ENCODE measurements at regions of chr4 and their contacts with region 1.

Region 1: DNA sequence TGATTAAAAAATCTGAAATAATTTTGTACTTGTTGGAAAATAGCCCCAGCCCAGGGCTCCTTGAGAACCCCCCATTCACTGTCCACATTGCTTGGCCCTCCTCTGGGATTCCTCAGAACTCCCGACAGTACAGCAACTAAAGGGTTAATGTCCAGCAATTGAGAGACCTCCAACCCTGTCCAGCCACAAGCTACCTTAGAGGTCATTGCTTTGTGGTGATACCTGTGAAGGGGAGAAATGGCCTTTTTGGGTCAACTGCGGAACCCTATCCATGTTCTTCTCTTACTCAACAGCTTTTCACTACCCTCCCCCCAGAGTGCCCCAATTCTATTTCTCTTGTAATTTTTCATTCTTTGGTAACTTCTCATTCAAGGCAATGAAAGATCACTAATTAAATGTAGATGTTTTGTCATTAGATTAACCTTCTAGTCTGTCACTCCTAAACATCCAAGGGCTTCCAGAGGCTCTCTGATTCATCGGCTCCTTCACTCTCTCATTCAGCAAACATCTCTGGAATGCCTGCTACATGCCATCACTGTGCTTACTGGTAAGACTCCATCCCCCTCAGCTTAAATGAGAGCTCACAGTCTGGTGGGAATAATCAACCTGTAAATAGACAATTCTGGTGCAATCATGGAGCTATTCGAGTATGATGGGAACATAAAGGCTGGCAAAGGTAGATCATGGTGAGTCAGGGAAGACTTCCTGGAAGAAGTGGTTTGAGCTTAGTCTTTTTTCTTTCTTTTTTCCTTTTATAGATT is 241.4 kb upstream of the PGRMC2 start:
- DNase-seq: peak; percentile 49 to 57
- H3K4me3 ChIP-seq: no peak overlapping the region
- H3K27ac ChIP-seq: peak overlapping the region; percentile 82 to 95 (median 94)
- H3K4me1 ChIP-seq: peaks cover 46 to 57% of the 10 kb centered on the region in 2 donors
- H3K27me3 ChIP-seq: no peaks in the 10 kb centered on the region
- CTCF ChIP-seq: no peak
- POLR2A ChIP-seq: no peak

Region 2: GRCh38 chr4:128471576-128471975 is 57.4 kb before region 1 on chr4:
- intact Hi-C with region 1: loop called (anchors 10 kb)
- DNase-seq: no peak
- H3K4me3 ChIP-seq: no peak overlapping the region
- H3K27ac ChIP-seq: no peak overlapping the region
- H3K4me1 ChIP-seq: peaks cover 13 to 15% of the 10 kb centered on the region in 2 donors
- H3K27me3 ChIP-seq: no peaks in the 10 kb centered on the region
- CTCF ChIP-seq: no peak
- POLR2A ChIP-seq: no peak

Region 3: GRCh38 chr4:128590773-128591172 is 61.8 kb after region 1 on chr4:
- intact Hi-C with region 1: no loop called
- DNase-seq: peak; percentile 73 to 83
- H3K4me3 ChIP-seq: no peak overlapping the region
- H3K27ac ChIP-seq: peak overlapping the region; percentile 84 to 93 (median 91)
- H3K4me1 ChIP-seq: peaks cover 53% of the 10 kb centered on the region in 2 donors
- H3K27me3 ChIP-seq: no peaks in the 10 kb centered on the region
- CTCF ChIP-seq: peak in 1 of 6 experiments; percentile 17
- POLR2A ChIP-seq: no peak

Region 4: GRCh38 chr4:128725405-128726055 is 196.6 kb after region 1 on chr4:
- intact Hi-C with region 1: no loop called
- DNase-seq: no peak
- H3K4me3 ChIP-seq: no peak overlapping the region
- H3K27ac ChIP-seq: no peak overlapping the region
- H3K4me1 ChIP-seq: no peaks in the 10 kb centered on the region
- H3K27me3 ChIP-seq: no peaks in the 10 kb centered on the region
- CTCF ChIP-seq: no peak
- POLR2A ChIP-seq: no peak

Measured in thyroid gland (tissue), 4 donors.